GM12878 (cell line): ENCODE measurements at regions of chr16 and their contacts with region 1.

Region 1: DNA sequence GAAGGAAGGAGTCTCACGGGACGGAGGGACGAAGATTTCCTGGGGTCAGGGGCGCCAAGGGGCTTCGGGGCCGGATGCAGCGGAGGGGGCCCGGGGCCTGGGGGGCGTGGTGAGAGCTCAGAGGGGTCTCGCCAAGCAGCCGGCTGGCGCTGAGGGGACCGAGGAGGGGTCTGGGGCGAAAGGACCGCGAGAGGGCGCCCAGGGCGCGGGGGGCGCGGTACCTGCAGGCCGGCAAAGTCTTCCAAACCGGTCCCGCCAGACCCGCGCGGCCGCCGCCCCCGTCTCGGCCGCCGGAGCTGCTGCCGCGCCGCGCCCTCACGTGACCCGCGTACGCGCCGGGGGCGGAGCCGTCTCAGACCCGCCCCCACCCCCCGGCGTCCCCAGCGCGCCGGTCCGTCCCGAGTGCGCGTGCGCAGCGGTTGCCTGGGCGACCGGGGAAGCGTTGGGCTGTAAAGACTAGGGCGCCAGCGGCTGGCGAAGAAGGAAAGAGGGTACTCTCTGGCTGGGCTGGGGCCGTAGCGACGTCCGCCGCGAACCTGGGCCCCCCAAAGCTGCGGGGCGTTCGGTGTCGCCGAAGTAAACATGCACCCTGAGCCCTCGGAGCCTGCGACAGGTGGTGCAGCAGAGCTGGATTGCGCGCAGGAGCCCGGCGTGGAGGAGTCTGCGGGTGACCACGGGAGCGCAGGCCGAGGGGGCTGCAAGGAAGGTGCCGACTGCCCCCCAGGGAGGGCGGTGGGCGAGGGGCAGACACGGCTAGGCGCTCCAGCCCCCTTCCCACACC is at the starts of genes DNAAF1 and HSDL1:
- DNase-seq: peak; percentile 32
- ATAC-seq: peak; percentile 94
- H3K4me3 ChIP-seq: peak within 1 kb of the TSS; percentile 91
- H3K27ac ChIP-seq: no peak within 1 kb of the TSS
- H3K4me1 ChIP-seq: no peaks in the 10 kb centered on the region
- H3K27me3 ChIP-seq: no peaks in the 10 kb centered on the region
- CTCF ChIP-seq: peak in 1 of 3 experiments; percentile 24; a peak in 1 of 6 replicates
- EP300 ChIP-seq: no peak
- POLR2A ChIP-seq: peak; percentile 61; the same call in 1 of the 2 replicates
- RAD21 ChIP-seq: no peak
- polyA plus RNA-seq, gene DNAAF1: 0.02 to 0.11 TPM
- polyA plus RNA-seq, gene HSDL1: 2.0 to 3.6 TPM

Region 2: DNA sequence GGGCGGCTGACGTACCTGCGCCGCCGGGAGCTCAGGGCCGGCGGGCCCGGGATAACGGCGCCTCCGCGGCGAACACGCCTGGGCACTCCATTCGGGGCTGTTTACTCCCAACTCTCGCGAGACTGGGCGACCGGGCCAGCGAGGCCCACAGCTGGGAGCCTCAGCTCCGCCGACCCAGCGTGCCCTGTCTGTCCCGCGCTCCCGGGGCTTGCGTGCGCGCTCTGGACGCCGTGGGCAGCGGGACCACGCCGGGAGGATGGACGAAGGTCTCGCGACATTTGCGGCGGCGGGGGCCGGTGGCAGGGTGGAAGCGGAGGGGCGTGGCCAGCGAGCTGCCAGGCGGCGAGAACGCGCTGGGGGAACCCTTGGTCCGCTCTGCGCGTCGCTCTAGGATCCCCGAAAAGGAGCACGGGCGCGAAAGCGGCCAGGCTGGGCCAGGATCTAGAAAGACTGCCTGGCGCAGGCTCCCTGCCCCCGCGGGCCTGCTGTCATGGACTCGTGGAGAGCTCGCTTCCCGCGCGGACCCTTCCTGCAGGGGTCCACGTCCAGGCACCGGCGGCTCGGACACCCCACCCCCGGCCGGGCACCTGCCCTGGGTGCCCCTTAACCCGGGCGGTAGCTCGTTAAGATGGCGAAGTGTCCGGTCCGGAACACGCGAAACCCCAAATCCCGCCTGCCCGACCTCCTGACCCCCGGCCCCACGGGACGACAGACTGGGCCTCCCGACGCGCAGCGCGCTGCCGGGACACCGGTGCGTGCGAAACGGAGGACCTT is 28.1 kb before region 1 on chr16 and contains the start of gene MBTPS1:
- CTCF ChIA-PET with region 1: interaction called, 3 read pairs
- POLR2A ChIA-PET with region 1: interaction called, 5 read pairs
- RAD21 ChIA-PET with region 1: no interaction called
- SMC1A ChIA-PET with region 1: no interaction called
- in situ Hi-C with region 1: no loop called
- intact Hi-C with region 1: loop called (anchors 2 kb)
- DNase-seq: peak; percentile 91
- ATAC-seq: peak; percentile 95
- H3K4me3 ChIP-seq: peak within 1 kb of the TSS; percentile 93
- H3K27ac ChIP-seq: peak within 1 kb of the TSS; percentile 89
- H3K4me1 ChIP-seq: peaks cover 11% of the 10 kb centered on the region; the same call in 1 of the 2 replicates
- H3K27me3 ChIP-seq: no peaks in the 10 kb centered on the region
- CTCF ChIP-seq: 0 out of 6 replicates have a peak, but pooled peaks of 1 of the 3 experiments have one; percentile 20
- EP300 ChIP-seq: 0 out of 4 replicates have a peak, but pooled peaks of 1 of the 2 experiments have one; percentile 47
- POLR2A ChIP-seq: peak; percentile 93
- RAD21 ChIP-seq: no peak; the same call in 1 of the 2 replicates
- polyA plus RNA-seq, gene MBTPS1: 1.3 to 3.3 TPM

Region 3: DNA sequence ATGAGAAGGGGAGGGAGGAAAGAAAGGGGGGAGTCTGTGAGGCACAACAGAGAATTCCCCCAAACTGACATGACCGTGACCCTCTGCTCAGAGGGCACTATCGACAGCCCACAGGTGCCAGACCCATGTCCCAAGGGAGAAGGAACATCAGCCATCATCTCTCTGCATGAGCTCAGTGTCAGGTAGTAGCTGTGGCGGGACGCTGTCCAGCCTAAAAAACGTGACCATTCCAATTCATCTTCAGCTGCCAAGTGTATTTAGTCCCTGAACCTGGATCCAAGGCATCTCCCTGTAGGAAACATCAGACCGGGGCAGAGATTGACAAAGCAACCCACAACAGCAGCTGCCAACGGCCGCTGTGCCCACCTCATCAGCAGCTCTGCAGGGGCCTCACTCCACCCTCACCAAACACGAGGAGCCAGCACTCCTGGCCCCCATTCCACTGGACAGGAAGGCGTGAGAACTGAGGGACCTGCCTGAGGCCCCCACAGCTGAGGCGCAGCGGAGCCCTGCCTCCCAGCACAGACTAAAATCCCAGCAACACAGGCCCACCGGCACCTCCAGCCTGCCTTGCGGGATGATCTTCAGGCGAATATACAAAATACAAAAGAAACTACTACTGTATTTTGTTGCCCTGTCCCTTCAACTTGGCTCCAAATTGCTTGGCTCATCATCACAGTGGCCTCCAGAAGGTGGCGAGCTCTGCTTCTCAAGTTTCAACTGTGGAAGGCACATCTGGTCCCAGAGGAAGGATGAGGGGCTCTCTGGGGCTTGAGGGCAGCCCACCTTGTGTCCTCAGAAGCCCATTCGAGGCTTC is 33.3 kb after region 1 on chr16:
- CTCF ChIA-PET with region 1: no interaction called
- POLR2A ChIA-PET with region 1: no interaction called
- RAD21 ChIA-PET with region 1: no interaction called
- SMC1A ChIA-PET with region 1: no interaction called
- in situ Hi-C with region 1: no loop called
- intact Hi-C with region 1: no loop called
- DNase-seq: no peak
- ATAC-seq: no peak
- H3K4me3 ChIP-seq: no peak overlapping the region
- H3K27ac ChIP-seq: no peak overlapping the region
- H3K4me1 ChIP-seq: peaks cover 13% of the 10 kb centered on the region
- H3K27me3 ChIP-seq: no peaks in the 10 kb centered on the region
- CTCF ChIP-seq: no peak
- EP300 ChIP-seq: no peak
- POLR2A ChIP-seq: no peak; the same call in 1 of the 2 replicates
- RAD21 ChIP-seq: no peak